ENCODE measurements at regions of chr4 and their contacts with region 1.

Region 1: DNA sequence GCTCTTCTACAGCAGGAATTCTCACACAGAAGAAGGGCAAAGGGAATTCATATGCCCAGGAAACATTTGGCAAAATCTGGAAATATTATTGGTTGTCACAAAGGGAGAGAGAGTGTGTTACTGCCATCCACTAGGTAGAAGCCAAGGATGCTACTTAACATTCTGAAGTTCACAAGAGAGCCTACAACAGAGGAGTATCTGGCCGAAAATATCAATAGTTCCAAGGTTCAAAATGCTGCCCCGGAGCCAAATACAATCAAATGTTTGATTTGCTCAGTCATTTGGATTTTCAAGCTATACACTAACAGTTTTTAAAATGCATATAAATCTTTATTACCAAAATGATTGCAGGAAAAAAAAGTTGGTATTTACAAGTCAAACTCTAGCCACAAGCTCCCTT is 18.8 kb downstream of the OTUD4 start:
- DNase-seq: no peak
- ATAC-seq: no peak
- H3K4me3 ChIP-seq: no peak overlapping the region
- H3K27ac ChIP-seq: no peak overlapping the region
- H3K4me1 ChIP-seq: no peaks in the 10 kb centered on the region
- H3K27me3 ChIP-seq: no peaks in the 10 kb centered on the region
- CTCF ChIP-seq: no peak
- EP300 ChIP-seq: no peak
- POLR2A ChIP-seq: no peak
- RAD21 ChIP-seq: no peak

Region 2: GRCh38 chr4:145171911-145172310 is 10.4 kb after region 1 on chr4:
- CTCF ChIA-PET with region 1: interaction called, 5 read pairs
- POLR2A ChIA-PET with region 1: interaction called, 4 read pairs
- RAD21 ChIA-PET with region 1: interaction called, 21 read pairs
- SMC1A ChIA-PET with region 1: interaction called, 42 read pairs
- in situ Hi-C with region 1: no loop called
- intact Hi-C with region 1: no loop called
- DNase-seq: no peak
- ATAC-seq: no peak
- H3K4me3 ChIP-seq: no peak overlapping the region
- H3K27ac ChIP-seq: no peak overlapping the region
- H3K4me1 ChIP-seq: peaks cover under 1% of the 10 kb centered on the region; the same call in 1 of the 2 replicates
- H3K27me3 ChIP-seq: no peaks in the 10 kb centered on the region
- CTCF ChIP-seq: no peak
- EP300 ChIP-seq: no peak
- POLR2A ChIP-seq: no peak
- RAD21 ChIP-seq: no peak

Region 3: DNA sequence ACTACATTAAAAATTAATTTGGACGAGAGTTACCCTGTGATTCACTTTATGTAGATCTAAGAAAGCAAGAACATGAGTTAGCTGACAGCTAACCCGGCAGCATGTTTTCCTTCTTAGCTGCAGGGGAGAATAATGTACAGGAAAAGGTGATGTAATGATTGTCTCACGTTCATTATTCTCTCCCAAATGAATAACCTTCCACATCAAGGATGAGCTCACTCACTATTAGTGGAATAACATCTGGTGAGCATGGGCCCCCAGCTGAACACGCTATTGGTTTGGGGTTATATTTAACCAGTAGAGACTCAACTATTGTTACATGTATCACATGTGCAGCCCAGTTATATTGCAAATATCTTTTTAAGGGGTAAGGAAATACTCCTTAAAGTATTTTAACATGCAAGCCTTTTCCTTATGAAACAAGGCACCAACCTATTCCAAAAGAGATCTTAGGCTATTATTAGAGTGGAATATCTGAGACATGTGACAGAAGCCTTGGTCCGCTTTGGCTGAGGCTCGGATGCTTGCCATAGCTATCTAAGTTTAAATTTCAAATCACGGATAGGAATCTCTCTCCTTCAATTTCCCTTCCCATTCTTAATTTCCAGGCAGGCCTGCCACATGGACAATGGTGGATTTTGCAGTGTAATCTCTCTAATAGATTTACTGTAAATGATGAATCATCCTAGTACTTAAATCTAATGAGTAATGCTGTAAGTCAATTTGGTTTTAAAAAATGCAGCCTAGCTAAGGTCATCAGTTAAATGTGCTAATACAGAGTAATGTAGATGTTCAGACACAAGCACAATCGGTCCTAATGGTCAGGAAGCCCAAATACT is 117.8 kb after region 1 on chr4:
- CTCF ChIA-PET with region 1: no interaction called
- POLR2A ChIA-PET with region 1: no interaction called
- RAD21 ChIA-PET with region 1: no interaction called
- SMC1A ChIA-PET with region 1: no interaction called
- in situ Hi-C with region 1: no loop called
- intact Hi-C with region 1: no loop called
- DNase-seq: no peak
- ATAC-seq: no peak
- H3K4me3 ChIP-seq: no peak overlapping the region
- H3K27ac ChIP-seq: no peak overlapping the region
- H3K4me1 ChIP-seq: no peaks in the 10 kb centered on the region
- H3K27me3 ChIP-seq: no peaks in the 10 kb centered on the region
- CTCF ChIP-seq: no peak
- EP300 ChIP-seq: no peak
- POLR2A ChIP-seq: no peak
- RAD21 ChIP-seq: no peak

Measured in GM12878 (cell line).